ENCODE measurements at regions of chr2 and their contacts with region 1.

Region 1: GRCh38 chr2:60555783-60556139 is 2.3 kb upstream of the BCL11A start:
- DNase-seq: no peak
- H3K4me3 Mint-ChIP-seq: peak overlapping the region; percentile 68
- H3K27ac Mint-ChIP-seq: no peak overlapping the region
- H3K4me1 Mint-ChIP-seq: peaks cover 34% of the 10 kb centered on the region
- H3K27me3 Mint-ChIP-seq: peaks cover 64% of the 10 kb centered on the region

Region 2: GRCh38 chr2:60104514-60105505 is 451.0 kb before region 1 on chr2:
- CTCF ChIA-PET with region 1: no interaction called
- intact Hi-C with region 1: loop called (anchors 2 kb)
- DNase-seq: peak; percentile 30
- H3K4me3 Mint-ChIP-seq: peak overlapping the region; percentile 53
- H3K27ac Mint-ChIP-seq: no peak overlapping the region
- H3K4me1 Mint-ChIP-seq: peaks cover 15% of the 10 kb centered on the region
- H3K27me3 Mint-ChIP-seq: peaks cover 3% of the 10 kb centered on the region

Region 3: DNA sequence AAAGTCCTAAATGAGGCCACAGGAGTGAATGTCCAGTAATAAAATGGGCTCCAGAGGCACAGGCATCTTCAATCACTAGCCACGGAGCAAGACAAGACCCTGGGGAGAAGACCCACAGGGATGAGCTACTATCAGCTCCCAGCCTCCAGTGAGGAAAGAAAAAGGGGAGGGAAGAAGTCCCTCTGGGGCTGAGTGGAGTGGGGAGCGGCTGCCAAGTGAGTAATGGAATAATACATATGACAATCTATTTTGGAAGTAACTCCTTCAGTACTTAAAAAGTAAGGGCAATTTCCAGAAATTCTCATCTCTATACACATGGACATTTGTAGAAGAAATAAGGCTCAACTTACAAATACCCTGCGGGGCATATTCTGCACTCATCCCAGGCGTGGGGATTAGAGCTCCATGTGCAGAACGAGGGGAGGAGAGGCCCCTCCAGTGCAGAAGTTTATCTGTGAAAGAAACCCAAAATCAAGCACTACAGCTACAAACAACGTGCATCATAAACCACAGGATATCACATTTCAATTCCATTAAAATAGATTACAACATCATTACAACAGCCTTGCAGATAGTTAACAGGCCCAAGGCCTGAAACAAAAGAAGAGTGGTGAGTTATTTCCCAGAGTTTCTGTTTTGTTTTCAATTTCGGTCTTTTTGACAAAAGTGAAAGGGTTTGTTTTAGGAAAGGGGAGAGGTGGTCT is 87.2 kb before region 1 on chr2:
- CTCF ChIA-PET with region 1: no interaction called
- intact Hi-C with region 1: no loop called
- DNase-seq: no peak
- H3K4me3 Mint-ChIP-seq: no peak overlapping the region
- H3K27ac Mint-ChIP-seq: no peak overlapping the region
- H3K4me1 Mint-ChIP-seq: no peaks in the 10 kb centered on the region
- H3K27me3 Mint-ChIP-seq: no peaks in the 10 kb centered on the region

Region 4: DNA sequence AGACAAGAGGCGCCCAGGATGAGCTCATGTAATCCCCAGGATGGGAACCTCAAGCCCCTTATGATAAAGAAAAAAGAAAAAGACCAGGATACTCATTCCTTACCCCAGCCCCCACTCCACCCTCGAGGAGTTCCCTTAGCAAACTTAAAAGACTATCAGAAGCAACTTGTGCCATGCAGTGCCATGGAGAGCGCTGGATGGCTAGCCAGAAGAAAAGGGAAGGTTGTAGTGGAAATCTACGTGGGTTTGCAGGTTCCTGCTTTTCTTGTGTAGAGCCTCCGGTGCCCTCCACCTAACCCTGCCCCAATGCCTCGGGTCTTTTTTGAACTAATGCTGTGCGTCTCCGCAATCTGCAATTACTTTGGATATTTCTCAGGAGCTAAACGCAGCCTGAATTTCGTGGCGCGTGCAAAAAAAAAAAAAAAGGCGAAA is 13.9 kb after region 1 on chr2:
- CTCF ChIA-PET with region 1: interaction called, 10 read pairs
- intact Hi-C with region 1: loop called (anchors 1 kb)
- DNase-seq: no peak
- H3K4me3 Mint-ChIP-seq: no peak overlapping the region
- H3K27ac Mint-ChIP-seq: no peak overlapping the region
- H3K4me1 Mint-ChIP-seq: no peaks in the 10 kb centered on the region
- H3K27me3 Mint-ChIP-seq: peaks cover 33% of the 10 kb centered on the region

Region 5: DNA sequence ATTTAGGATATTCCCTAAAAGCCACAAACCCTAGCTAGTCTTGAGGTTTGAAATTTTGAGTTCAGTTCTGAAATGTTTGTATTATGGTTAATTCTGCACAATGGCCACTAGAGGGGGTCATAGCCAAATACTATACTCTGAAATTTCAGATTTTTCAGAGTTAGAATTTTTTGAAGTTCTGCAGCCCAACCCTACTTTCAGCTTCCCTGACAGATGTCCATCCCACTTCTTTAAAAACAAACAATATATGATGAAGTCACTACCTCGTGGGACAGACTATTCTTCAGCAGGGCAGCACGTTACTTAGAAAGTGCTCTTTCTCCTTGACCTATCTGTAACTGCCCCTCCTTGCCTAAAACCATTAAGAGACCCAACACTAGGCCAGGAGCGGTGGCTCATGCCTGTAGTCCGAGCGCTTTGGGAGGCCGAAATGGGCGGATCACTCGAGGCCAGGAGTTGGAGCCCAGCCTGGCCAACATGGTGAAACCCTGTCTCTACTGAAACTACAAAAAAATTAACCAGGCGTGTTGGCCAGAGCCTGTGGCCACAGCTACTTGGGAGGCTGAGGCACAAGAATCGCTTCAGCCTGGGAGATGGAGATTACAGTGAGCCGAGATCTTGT is 152.1 kb after region 1 on chr2:
- CTCF ChIA-PET with region 1: no interaction called
- intact Hi-C with region 1: no loop called
- DNase-seq: no peak
- H3K4me3 Mint-ChIP-seq: no peak overlapping the region
- H3K27ac Mint-ChIP-seq: no peak overlapping the region
- H3K4me1 Mint-ChIP-seq: no peaks in the 10 kb centered on the region
- H3K27me3 Mint-ChIP-seq: no peaks in the 10 kb centered on the region

Region 6: GRCh38 chr2:60840880-60841279 is 285.1 kb after region 1 on chr2:
- CTCF ChIA-PET with region 1: no interaction called
- intact Hi-C with region 1: no loop called
- DNase-seq: peak; percentile 38
- H3K4me3 Mint-ChIP-seq: no peak overlapping the region
- H3K27ac Mint-ChIP-seq: no peak overlapping the region
- H3K4me1 Mint-ChIP-seq: peaks cover 27% of the 10 kb centered on the region
- H3K27me3 Mint-ChIP-seq: no peaks in the 10 kb centered on the region

Region 7: GRCh38 chr2:60926737-60927552 is 371.2 kb after region 1 on chr2:
- CTCF ChIA-PET with region 1: no interaction called
- intact Hi-C with region 1: no loop called
- DNase-seq: no peak
- H3K4me3 Mint-ChIP-seq: no peak overlapping the region
- H3K27ac Mint-ChIP-seq: no peak overlapping the region
- H3K4me1 Mint-ChIP-seq: peaks cover 9% of the 10 kb centered on the region
- H3K27me3 Mint-ChIP-seq: no peaks in the 10 kb centered on the region

Measured in activated naive CD4-positive, alpha-beta T cell treated with anti-CD3 and anti-CD28 coated beads for 36 hours (primary cell).